ENCODE measurements at regions of chr5 and their contacts with region 1.

Region 1: DNA sequence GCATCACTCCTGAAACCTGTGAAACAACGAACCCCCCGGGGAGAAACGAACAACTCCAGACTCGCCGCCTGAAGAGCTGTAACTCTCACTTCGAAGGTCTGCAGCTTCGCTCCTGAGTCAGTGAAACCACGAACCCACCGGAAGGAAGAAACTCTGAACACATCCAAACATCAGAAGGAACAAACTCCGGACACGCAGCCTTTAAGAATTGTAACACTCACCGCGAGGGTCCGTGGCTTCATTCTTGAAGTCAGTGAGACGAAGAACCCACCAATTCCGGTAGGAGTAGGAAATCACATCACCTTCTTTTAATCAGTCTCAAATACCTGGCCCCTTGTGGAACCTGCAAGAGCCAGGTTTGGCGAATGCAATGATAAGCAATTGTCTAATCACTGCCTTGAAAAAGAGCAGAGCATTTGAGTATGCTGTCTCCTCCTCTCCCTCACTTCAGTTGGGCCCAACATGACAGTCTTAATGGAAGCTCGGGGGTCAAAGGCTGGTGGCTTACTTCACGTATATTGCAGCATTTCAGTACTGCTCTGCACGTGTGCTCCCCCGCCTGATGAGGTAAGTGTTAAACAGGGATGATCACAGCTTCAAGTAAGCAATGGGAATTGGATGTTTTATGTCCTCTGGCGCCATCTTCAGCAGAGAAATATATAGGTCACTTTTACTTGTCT is 473 bp downstream of the IRGM start:
- DNase-seq: peak; percentile 86
- H3K4me3 ChIP-seq: no peak overlapping the region
- H3K27ac ChIP-seq: no peak overlapping the region
- H3K4me1 ChIP-seq: no peaks in the 10 kb centered on the region
- H3K27me3 ChIP-seq: peaks cover 3 to 6% of the 10 kb centered on the region in 2 experiments
- CTCF ChIP-seq: peak; percentile 20 to 41
- POLR2A ChIP-seq: no peak

Region 2: DNA sequence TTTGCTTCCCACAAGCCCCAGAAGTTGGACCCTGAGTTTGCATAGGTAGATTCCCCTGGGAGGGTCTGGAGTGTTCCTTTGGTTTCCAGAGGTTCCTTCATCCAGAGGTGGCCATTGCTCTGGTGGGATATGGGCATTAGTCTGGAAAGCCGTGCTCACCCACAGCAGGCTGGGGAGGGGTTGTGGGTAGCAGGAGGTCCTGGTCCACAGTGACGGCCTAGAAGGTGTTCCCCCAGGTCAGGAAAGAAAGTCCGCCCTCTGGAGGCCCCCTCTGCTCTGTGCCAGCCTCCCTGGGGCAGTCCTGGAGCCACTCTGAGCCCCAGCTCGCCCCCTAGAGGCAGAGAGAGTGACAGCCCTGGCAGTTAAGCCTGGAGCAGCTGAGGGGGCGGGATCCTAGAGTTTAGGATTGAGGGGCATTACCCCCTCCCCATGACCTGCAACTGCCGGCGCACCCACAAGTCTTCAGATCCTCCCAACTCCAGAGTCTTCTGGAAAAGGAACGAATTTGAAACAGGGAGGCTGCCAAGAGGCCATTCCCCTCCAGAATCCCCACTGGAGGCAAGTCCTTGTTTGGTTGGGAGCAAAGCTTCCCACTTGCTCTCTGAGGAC is 302.1 kb before region 1 on chr5:
- CTCF ChIA-PET with region 1: no interaction called
- POLR2A ChIA-PET with region 1: no interaction called
- dilution Hi-C with region 1: no loop called
- intact Hi-C with region 1: no loop called
- DNase-seq: peak; percentile 69
- H3K4me3 ChIP-seq: no peak overlapping the region
- H3K27ac ChIP-seq: no peak overlapping the region
- H3K4me1 ChIP-seq: peaks cover 20% of the 10 kb centered on the region
- H3K27me3 ChIP-seq: no peaks in the 10 kb centered on the region
- CTCF ChIP-seq: peak; percentile 95 to 97
- POLR2A ChIP-seq: no peak

Region 3: DNA sequence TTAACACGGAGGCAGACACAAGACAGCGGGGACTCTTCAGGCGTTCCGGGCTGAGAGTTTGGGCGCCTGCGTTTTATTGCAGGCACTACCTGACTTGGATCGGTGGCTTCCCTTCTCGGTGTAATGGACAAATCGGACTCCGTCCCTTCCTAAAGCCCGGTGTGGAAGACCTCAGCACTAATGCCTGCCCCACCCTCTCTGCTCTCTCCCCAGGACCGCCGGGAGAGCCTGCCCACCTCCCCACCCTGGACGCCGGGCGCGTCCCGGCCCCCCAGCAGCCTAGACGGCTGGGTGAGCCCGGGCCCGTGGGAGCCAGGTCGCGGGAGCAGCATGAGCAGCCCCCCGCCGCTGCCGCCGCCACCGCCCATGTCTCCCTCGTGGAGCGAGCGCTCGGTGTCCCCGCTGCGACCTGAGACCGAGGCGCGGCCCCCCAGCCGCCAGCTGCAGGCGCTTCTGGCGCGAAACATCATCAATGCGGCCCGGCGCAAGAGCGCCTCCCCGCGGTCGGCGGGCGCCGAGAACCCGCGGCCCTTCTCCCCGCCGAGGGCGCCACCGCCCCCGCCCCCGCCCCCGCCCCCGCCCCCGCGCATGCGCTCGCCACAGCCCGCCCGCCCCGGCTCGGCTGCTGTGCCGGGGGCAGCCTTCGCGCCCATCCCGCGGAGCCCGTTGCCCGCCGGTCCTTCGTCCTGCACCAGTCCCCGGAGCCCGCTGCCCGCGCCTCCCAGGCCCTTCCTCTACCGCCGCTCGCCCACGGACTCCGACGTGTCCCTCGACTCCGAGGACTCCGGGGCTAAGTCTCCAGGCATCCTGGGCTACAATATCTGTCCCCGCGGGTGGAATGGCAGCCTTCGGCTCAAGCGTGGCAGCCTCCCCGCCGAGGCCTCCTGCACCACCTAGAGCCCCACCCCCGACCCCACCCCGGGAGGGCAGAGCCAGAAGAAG is 190.3 kb before region 1 on chr5:
- CTCF ChIA-PET with region 1: interaction called, 16 read pairs
- POLR2A ChIA-PET with region 1: no interaction called
- dilution Hi-C with region 1: no loop called
- intact Hi-C with region 1: loop called (anchors 1 kb)
- DNase-seq: peak; percentile 46
- H3K4me3 ChIP-seq: no peak overlapping the region
- H3K27ac ChIP-seq: no peak overlapping the region
- H3K4me1 ChIP-seq: no peaks in the 10 kb centered on the region
- H3K27me3 ChIP-seq: peaks cover under 1 to 7% of the 10 kb centered on the region in 2 experiments
- CTCF ChIP-seq: peak; percentile 34 to 70
- POLR2A ChIP-seq: peak; percentile 58

Region 4: DNA sequence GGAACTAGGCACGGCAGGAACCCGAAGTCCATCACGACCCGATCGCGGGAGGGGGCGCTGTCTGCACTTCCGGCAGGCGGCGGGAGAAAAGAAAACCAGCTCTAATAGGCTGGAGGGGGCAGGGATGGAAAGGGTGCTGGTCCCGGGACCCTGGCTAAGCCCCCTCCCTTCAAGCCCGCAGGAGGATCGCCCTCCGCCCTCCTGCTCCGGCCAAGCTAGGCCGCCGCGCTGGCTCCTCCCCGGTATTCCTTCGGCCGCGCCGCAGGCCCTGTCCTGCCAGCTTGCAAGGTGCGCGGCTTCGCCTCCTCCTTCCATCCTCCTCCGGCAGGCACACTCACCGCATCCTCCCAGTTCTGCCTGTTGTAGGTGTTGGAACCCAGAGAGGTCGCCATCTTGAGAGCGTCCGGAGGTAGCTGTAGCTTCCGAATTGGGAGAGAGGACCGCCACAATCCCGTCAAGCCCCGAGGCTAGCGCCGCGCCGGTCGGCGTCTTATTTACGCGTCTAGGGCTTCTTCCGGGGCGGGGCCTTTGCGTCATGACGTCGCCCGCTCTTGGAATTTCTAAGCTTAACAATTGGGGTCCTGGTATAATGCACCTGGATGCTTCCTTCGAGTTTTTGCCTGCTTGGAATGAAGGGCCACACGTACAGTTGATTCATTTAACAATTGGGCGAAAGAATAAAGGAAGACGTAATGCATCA is 146.1 kb before region 1 on chr5 and contains the start of gene RBM22:
- CTCF ChIA-PET with region 1: interaction called, 25 read pairs
- POLR2A ChIA-PET with region 1: no interaction called
- dilution Hi-C with region 1: no loop called
- intact Hi-C with region 1: loop called (anchors 1 kb)
- DNase-seq: peak; percentile 92
- H3K4me3 ChIP-seq: peak within 1 kb of the TSS; percentile 45 to 98 (median 69)
- H3K27ac ChIP-seq: peak within 1 kb of the TSS; percentile 73
- H3K4me1 ChIP-seq: peaks cover 13% of the 10 kb centered on the region
- H3K27me3 ChIP-seq: peaks cover 3 to 6% of the 10 kb centered on the region in 2 experiments
- CTCF ChIP-seq: peak; percentile 40 to 78
- POLR2A ChIP-seq: peak; percentile 93
- total RNA-seq, gene RBM22: 44.4 and 51.2 TPM in 2 replicates

Region 5: GRCh38 chr5:150778517-150779396 is 68.0 kb before region 1 on chr5 and contains the start of gene SMIM3:
- CTCF ChIA-PET with region 1: interaction called, 12 read pairs
- POLR2A ChIA-PET with region 1: no interaction called
- dilution Hi-C with region 1: no loop called
- intact Hi-C with region 1: no loop called
- DNase-seq: peak; percentile 58
- H3K4me3 ChIP-seq: peak within 1 kb of the TSS; percentile 7 to 41 (median 40)
- H3K27ac ChIP-seq: no peak within 1 kb of the TSS
- H3K4me1 ChIP-seq: peaks cover 30% of the 10 kb centered on the region
- H3K27me3 ChIP-seq: peaks cover 30 to 43% of the 10 kb centered on the region in 2 experiments
- CTCF ChIP-seq: peak; percentile 20 to 56
- POLR2A ChIP-seq: no peak
- total RNA-seq, gene SMIM3: 0.97 and 1.0 TPM in 2 replicates

Region 6: GRCh38 chr5:150816946-150817345 is 29.8 kb before region 1 on chr5:
- CTCF ChIA-PET with region 1: interaction called, 4 read pairs
- POLR2A ChIA-PET with region 1: no interaction called
- dilution Hi-C with region 1: no loop called
- intact Hi-C with region 1: loop called (anchors 1 kb)
- DNase-seq: no peak
- H3K4me3 ChIP-seq: no peak overlapping the region
- H3K27ac ChIP-seq: no peak overlapping the region
- H3K4me1 ChIP-seq: no peaks in the 10 kb centered on the region
- H3K27me3 ChIP-seq: peaks cover 3 to 7% of the 10 kb centered on the region in 2 experiments
- CTCF ChIP-seq: no peak
- POLR2A ChIP-seq: no peak

Region 7: GRCh38 chr5:150918613-150919012 is 71.8 kb after region 1 on chr5:
- CTCF ChIA-PET with region 1: no interaction called
- POLR2A ChIA-PET with region 1: no interaction called
- dilution Hi-C with region 1: no loop called
- intact Hi-C with region 1: no loop called
- DNase-seq: peak; percentile 47
- H3K4me3 ChIP-seq: no peak overlapping the region
- H3K27ac ChIP-seq: no peak overlapping the region
- H3K4me1 ChIP-seq: no peaks in the 10 kb centered on the region
- H3K27me3 ChIP-seq: no peaks in the 10 kb centered on the region
- CTCF ChIP-seq: no peak
- POLR2A ChIP-seq: no peak

Region 8: DNA sequence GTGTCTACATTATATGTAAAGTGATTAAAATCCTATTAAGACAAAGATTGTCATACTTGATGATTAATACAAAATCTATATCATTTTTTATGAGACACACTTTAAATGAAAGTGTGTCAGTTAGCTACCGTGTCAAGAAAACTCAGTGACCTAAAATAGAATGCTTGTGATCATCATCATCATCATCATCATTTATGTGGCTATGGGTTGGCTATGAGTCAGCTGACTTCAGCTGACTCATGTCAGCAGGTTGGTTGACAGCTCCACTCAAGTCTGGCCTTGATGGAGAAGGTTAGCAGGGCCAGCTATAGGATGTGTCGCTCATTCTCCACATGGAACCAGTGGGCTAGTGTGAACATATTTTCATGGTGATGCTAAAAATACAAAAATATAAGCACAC is 101.7 kb after region 1 on chr5:
- CTCF ChIA-PET with region 1: no interaction called
- POLR2A ChIA-PET with region 1: no interaction called
- dilution Hi-C with region 1: no loop called
- intact Hi-C with region 1: no loop called
- DNase-seq: no peak
- H3K4me3 ChIP-seq: no peak overlapping the region
- H3K27ac ChIP-seq: no peak overlapping the region
- H3K4me1 ChIP-seq: no peaks in the 10 kb centered on the region
- H3K27me3 ChIP-seq: no peaks in the 10 kb centered on the region
- CTCF ChIP-seq: no peak
- POLR2A ChIP-seq: no peak

Region 9: GRCh38 chr5:151150471-151151262 is 303.9 kb after region 1 on chr5:
- CTCF ChIA-PET with region 1: no interaction called
- POLR2A ChIA-PET with region 1: no interaction called
- dilution Hi-C with region 1: no loop called
- intact Hi-C with region 1: no loop called
- DNase-seq: peak; percentile 38
- H3K4me3 ChIP-seq: no peak overlapping the region
- H3K27ac ChIP-seq: no peak overlapping the region
- H3K4me1 ChIP-seq: peaks cover 27% of the 10 kb centered on the region
- H3K27me3 ChIP-seq: no peaks in the 10 kb centered on the region
- CTCF ChIP-seq: no peak
- POLR2A ChIP-seq: no peak

Measured in endothelial cell of umbilical vein (primary cell).